ENCODE measurements at regions of chr9 and their contacts with region 1.

Region 1: GRCh38 chr9:72952914-72953313 is at the start of gene ALDH1A1:
- DNase-seq: no peak
- ATAC-seq: no peak
- H3K4me3 ChIP-seq: no peak within 1 kb of the TSS
- H3K27ac ChIP-seq: no peak within 1 kb of the TSS
- H3K4me1 ChIP-seq: no peaks in the 10 kb centered on the region
- H3K27me3 ChIP-seq: no peaks in the 10 kb centered on the region; a peak in 1 of 4 replicates
- CTCF ChIP-seq: no peak
- EP300 ChIP-seq: no peak
- POLR2A ChIP-seq: no peak
- RAD21 ChIP-seq: no peak
- polyA plus RNA-seq, gene ALDH1A1: 0.03 TPM in 1 of 2 experiments, not detected in the other

Region 2: GRCh38 chr9:72902268-72902667 is 50.6 kb before region 1 on chr9:
- CTCF ChIA-PET with region 1: no interaction called
- POLR2A ChIA-PET with region 1: no interaction called
- RAD21 ChIA-PET with region 1: no interaction called
- SMC1A ChIA-PET with region 1: interaction called, 4 read pairs
- in situ Hi-C with region 1: loop called (anchors 5 kb)
- intact Hi-C with region 1: no loop called
- DNase-seq: no peak
- ATAC-seq: no peak
- H3K4me3 ChIP-seq: no peak overlapping the region
- H3K27ac ChIP-seq: no peak overlapping the region
- H3K4me1 ChIP-seq: no peaks in the 10 kb centered on the region
- H3K27me3 ChIP-seq: no peaks in the 10 kb centered on the region; a peak in 1 of 4 replicates
- CTCF ChIP-seq: no peak
- EP300 ChIP-seq: no peak
- POLR2A ChIP-seq: no peak
- RAD21 ChIP-seq: no peak

Region 3: DNA sequence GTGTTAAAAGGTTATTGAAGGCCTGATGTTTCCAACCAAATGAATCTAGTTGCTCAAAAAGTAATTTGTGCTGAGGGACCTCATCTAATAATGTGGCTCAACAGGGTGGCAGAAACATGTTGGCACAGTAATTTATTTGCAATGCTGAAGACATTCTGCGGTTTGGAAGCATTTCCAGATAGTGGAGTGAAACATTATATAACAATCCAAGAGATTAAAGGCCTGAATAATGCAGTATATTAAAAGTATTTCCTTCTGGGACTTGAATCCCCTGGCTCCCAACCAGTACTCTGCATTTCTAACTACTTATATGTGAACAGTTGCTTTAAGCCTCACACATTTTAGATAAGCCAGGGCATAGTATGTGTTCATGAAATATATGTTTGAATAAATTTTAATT is 25.8 kb after region 1 on chr9:
- CTCF ChIA-PET with region 1: no interaction called
- POLR2A ChIA-PET with region 1: no interaction called
- RAD21 ChIA-PET with region 1: no interaction called
- SMC1A ChIA-PET with region 1: no interaction called
- in situ Hi-C with region 1: no loop called
- intact Hi-C with region 1: no loop called
- DNase-seq: no peak
- ATAC-seq: no peak
- H3K4me3 ChIP-seq: no peak overlapping the region
- H3K27ac ChIP-seq: no peak overlapping the region
- H3K4me1 ChIP-seq: no peaks in the 10 kb centered on the region
- H3K27me3 ChIP-seq: no peaks in the 10 kb centered on the region
- CTCF ChIP-seq: no peak
- EP300 ChIP-seq: no peak
- POLR2A ChIP-seq: no peak
- RAD21 ChIP-seq: no peak

Measured in GM12878 (cell line).